ENCODE measurements at regions of chr16 and their contacts with region 1.

Region 1: GRCh38 chr16:2340564-2341455 is at the start of gene ABCA3:
- DNase-seq: peak; percentile 97
- ATAC-seq: peak; percentile 92
- H3K4me3 Mint-ChIP-seq: peak within 1 kb of the TSS; percentile 82
- H3K27ac Mint-ChIP-seq: peak within 1 kb of the TSS; percentile 21
- H3K4me1 Mint-ChIP-seq: peaks cover 13% of the 10 kb centered on the region
- H3K27me3 Mint-ChIP-seq: peaks cover 7% of the 10 kb centered on the region
- total RNA-seq, gene ABCA3: 6.0 to 7.2 TPM

Region 2: GRCh38 chr16:1782352-1783091 is 558.3 kb before region 1 on chr16 and contains the starts of genes NUBP2 and SPSB3:
- CTCF ChIA-PET with region 1: no interaction called
- POLR2A ChIA-PET with region 1: no interaction called
- intact Hi-C with region 1: loop called in 1 of 2 experiments (anchors 1 kb)
- DNase-seq: peak; percentile 99
- ATAC-seq: peak; percentile 93
- H3K4me3 Mint-ChIP-seq: peak within 1 kb of the TSS; percentile 94
- H3K27ac Mint-ChIP-seq: peak within 1 kb of the TSS; percentile 85
- H3K4me1 Mint-ChIP-seq: peaks cover 26% of the 10 kb centered on the region
- H3K27me3 Mint-ChIP-seq: no peaks in the 10 kb centered on the region
- total RNA-seq, gene NUBP2: 34.4 to 42.4 TPM
- total RNA-seq, gene SPSB3: 12.5 to 13.6 TPM

Region 3: GRCh38 chr16:2205104-2205966 is 135.5 kb before region 1 on chr16 and contains the start of gene MLST8:
- CTCF ChIA-PET with region 1: no interaction called
- POLR2A ChIA-PET with region 1: no interaction called
- intact Hi-C with region 1: loop called in 1 of 2 experiments (anchors 2 kb)
- DNase-seq: peak; percentile 92
- ATAC-seq: peak; percentile 84
- H3K4me3 Mint-ChIP-seq: peak within 1 kb of the TSS; percentile 83
- H3K27ac Mint-ChIP-seq: peak within 1 kb of the TSS; percentile 84
- H3K4me1 Mint-ChIP-seq: peaks cover 16% of the 10 kb centered on the region
- H3K27me3 Mint-ChIP-seq: no peaks in the 10 kb centered on the region
- total RNA-seq, gene MLST8: 61.3 to 76.1 TPM

Region 4: DNA sequence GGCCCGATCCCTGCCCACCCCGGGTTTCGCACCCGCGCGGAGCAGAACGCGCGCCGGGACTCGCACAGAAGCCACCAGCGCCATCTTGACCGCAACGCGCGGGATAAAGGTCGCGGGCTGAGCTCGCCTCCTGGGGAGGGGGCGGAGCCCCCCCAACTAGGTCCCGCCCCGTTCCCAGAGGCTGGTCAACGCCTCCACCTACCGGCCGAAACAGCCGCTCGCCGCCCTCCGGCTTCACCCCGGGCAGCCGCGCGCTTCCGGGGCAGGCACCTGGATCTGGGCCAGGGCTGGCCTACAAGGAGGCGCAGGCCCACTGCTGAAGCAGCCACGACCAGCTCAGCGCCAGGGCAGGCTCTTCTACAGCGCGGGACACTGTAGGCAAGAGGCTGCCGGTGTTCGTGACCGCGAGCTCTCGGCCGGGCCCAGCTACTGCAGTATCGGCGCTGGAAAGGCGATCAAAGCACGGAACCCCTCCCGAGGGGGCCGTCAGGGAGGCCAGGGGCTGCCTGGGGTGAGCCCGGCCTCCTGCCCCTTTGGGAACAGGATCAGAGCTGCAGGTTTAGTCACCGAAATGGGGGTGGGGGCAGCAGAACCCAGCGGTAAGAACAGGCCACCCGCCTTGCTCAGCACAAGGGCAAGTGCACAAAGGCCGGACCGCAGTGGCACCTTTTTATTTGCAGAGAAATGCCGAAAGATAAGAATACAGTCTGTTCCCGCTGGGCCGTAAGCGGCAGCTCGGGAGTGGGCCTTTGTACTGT is 89.1 kb before region 1 on chr16 and contains the start of gene ECI1:
- CTCF ChIA-PET with region 1: no interaction called
- POLR2A ChIA-PET with region 1: no interaction called
- intact Hi-C with region 1: loop called in 1 of 2 experiments (anchors 1 kb)
- DNase-seq: peak; percentile 92
- ATAC-seq: peak; percentile 87
- H3K4me3 Mint-ChIP-seq: peak within 1 kb of the TSS; percentile 90
- H3K27ac Mint-ChIP-seq: peak within 1 kb of the TSS; percentile 90
- H3K4me1 Mint-ChIP-seq: peaks cover 5% of the 10 kb centered on the region
- H3K27me3 Mint-ChIP-seq: no peaks in the 10 kb centered on the region
- total RNA-seq, gene ECI1: 23.0 to 41.0 TPM

Region 5: DNA sequence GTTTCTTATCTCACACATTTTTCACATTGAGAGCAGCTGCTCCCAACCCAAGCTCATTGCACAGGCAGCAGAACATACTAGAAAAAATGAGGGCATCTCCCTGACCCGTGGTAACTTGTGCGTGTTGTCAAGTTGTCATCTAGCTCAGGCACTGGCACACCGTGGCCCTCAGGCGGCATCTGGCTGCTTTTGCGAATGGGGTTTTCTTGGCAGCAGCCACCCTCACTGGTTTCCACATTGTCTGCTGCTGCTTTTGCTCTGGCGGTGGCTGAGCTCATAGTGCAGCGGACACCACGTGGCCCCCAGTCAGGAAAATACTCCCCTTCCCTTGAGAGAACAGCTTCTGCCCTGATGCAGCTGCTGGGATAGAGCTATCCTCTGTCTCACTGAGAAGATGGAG is 109.7 kb after region 1 on chr16:
- CTCF ChIA-PET with region 1: no interaction called
- POLR2A ChIA-PET with region 1: no interaction called
- intact Hi-C with region 1: no loop called
- DNase-seq: no peak
- ATAC-seq: no peak
- H3K4me3 Mint-ChIP-seq: no peak overlapping the region
- H3K27ac Mint-ChIP-seq: no peak overlapping the region
- H3K4me1 Mint-ChIP-seq: no peaks in the 10 kb centered on the region
- H3K27me3 Mint-ChIP-seq: no peaks in the 10 kb centered on the region

Region 6: DNA sequence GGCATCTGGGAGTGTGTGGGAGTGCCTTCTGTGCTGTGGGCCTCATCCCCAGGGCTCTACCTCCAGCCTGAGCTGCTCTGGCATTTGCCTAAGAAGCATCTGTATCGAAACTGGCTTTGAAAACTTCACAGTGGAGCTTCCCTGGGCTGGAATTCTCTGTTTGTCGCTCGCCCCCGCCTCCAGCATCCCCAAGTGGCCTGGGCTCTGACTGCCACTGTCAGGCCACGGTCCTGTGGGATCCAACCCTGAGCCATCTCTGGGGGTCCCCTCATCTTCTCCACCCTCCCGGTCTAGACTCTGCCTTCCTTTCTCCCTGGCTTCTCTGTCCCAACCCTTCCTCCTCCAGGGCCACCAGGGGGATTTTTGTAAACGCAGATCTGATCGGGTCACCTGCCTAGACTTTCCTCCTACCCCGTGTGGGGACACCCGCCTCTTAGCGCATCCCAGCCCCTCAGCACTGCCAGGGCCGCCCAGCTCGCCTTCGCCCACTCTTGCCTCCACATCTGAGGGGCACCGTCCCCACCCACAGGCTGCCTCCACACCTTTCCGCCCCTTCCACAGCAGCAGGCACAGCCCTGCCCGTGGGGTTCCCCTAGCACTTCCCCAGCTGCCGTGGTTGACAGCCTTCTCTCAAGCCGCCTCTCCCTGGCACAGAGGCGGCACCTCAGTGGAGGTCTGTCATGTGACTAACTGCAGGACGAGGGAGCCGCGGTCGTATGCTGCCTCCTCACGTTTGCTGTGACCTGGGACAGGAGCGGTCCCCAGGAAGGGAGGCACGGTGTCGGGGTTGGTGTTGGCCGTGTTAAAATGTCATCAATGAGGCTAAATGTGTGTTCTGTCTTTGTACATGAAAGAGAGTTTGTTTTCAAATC is 146.1 kb after region 1 on chr16:
- CTCF ChIA-PET with region 1: interaction called, 3 read pairs
- POLR2A ChIA-PET with region 1: no interaction called
- intact Hi-C with region 1: loop called in 1 of 2 experiments (anchors 1 kb)
- DNase-seq: peak; percentile 90
- ATAC-seq: peak; percentile 99
- H3K4me3 Mint-ChIP-seq: peak overlapping the region; percentile 51
- H3K27ac Mint-ChIP-seq: peak overlapping the region; percentile 70
- H3K4me1 Mint-ChIP-seq: peaks cover 14% of the 10 kb centered on the region
- H3K27me3 Mint-ChIP-seq: no peaks in the 10 kb centered on the region